A549 (cell line): ENCODE measurements at regions of chr14 and their contacts with region 1.

Region 1: GRCh38 chr14:102437997-102438915 is 71.3 kb downstream of the ANKRD9 start:
- DNase-seq: peak; percentile 84 to 91
- ATAC-seq: peak; percentile 95 to 98
- H3K4me3 ChIP-seq: no peak overlapping the region
- H3K27ac ChIP-seq: 0 out of 6 replicates have a peak overlapping the region, but pooled peaks of 1 of the 2 experiments have one; percentile 50
- H3K4me1 ChIP-seq: no peaks in the 10 kb centered on the region
- CTCF ChIP-seq: peak; percentile 78
- EP300 ChIP-seq: no peak
- POLR2A ChIP-seq: no peak
- RAD21 ChIP-seq: peak; percentile 84 to 85

Region 2: GRCh38 chr14:102351026-102351425 is 87.2 kb before region 1 on chr14:
- CTCF ChIA-PET with region 1: no interaction called
- POLR2A ChIA-PET with region 1: no interaction called
- DNase-seq: no peak
- ATAC-seq: no peak
- H3K4me3 ChIP-seq: no peak overlapping the region
- H3K27ac ChIP-seq: no peak overlapping the region
- H3K4me1 ChIP-seq: no peaks in the 10 kb centered on the region
- CTCF ChIP-seq: no peak
- EP300 ChIP-seq: no peak
- POLR2A ChIP-seq: no peak
- RAD21 ChIP-seq: no peak

Region 3: GRCh38 chr14:102421411-102422053 is 16.7 kb before region 1 on chr14:
- CTCF ChIA-PET with region 1: interaction called, 28 read pairs
- POLR2A ChIA-PET with region 1: no interaction called
- DNase-seq: no peak
- ATAC-seq: no peak
- H3K4me3 ChIP-seq: no peak overlapping the region
- H3K27ac ChIP-seq: no peak overlapping the region
- H3K4me1 ChIP-seq: no peaks in the 10 kb centered on the region
- CTCF ChIP-seq: no peak
- EP300 ChIP-seq: no peak
- POLR2A ChIP-seq: no peak
- RAD21 ChIP-seq: no peak

Region 4: GRCh38 chr14:102485696-102486488 is 47.6 kb after region 1 on chr14:
- CTCF ChIA-PET with region 1: interaction called, 18 read pairs
- POLR2A ChIA-PET with region 1: no interaction called
- DNase-seq: no peak
- ATAC-seq: no peak
- H3K4me3 ChIP-seq: no peak overlapping the region
- H3K27ac ChIP-seq: no peak overlapping the region
- H3K4me1 ChIP-seq: peaks cover 10% of the 10 kb centered on the region
- CTCF ChIP-seq: no peak
- EP300 ChIP-seq: no peak
- POLR2A ChIP-seq: no peak
- RAD21 ChIP-seq: no peak

Region 5: DNA sequence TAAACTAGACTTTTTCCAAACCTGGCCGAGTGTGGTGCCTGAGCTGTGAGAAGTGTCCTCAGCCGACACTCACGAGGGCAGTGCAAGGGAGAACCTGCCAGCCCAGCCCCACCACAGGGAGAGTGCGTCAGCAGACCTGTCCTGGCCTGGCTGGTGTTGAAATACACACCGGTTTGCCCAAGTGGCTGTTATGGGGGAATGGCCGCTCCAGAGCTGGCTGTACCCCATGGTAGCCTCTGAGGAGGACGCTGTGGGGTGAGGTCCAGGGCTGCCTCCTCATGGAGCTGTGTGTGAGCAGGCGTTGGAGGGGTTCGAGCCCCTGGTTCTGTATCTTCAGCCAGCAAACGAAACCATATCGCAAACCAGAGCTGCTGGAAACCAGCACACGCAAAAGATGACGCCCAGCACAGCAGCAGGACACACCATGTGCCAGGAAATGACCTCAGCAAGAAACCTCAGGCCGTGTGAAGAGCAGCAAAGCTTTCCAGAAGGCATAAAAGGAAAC is 62.0 kb after region 1 on chr14:
- CTCF ChIA-PET with region 1: interaction called, 52 read pairs
- POLR2A ChIA-PET with region 1: no interaction called
- DNase-seq: no peak
- ATAC-seq: no peak
- H3K4me3 ChIP-seq: no peak overlapping the region
- H3K27ac ChIP-seq: no peak overlapping the region
- H3K4me1 ChIP-seq: no peaks in the 10 kb centered on the region
- CTCF ChIP-seq: no peak
- EP300 ChIP-seq: no peak
- POLR2A ChIP-seq: no peak
- RAD21 ChIP-seq: no peak

Region 6: GRCh38 chr14:102516531-102517415 is 78.5 kb after region 1 on chr14:
- CTCF ChIA-PET with region 1: interaction called, 154 read pairs
- POLR2A ChIA-PET with region 1: no interaction called
- DNase-seq: peak; percentile 58 to 67
- ATAC-seq: peak; percentile 83 to 86
- H3K4me3 ChIP-seq: peak overlapping the region; percentile 95
- H3K27ac ChIP-seq: peak overlapping the region; percentile 91 to 97
- H3K4me1 ChIP-seq: no peaks in the 10 kb centered on the region
- CTCF ChIP-seq: peak; percentile 99
- EP300 ChIP-seq: no peak
- POLR2A ChIP-seq: no peak; the same call in 1 of the 2 replicates
- RAD21 ChIP-seq: peak; percentile 62 to 95